Left cardiac atrium (tissue), 4 donors: ENCODE measurements at regions of chr3 and their contacts with region 1.

Region 1: GRCh38 chr3:52892625-52893311 is 4.6 kb downstream of the STIMATE start:
- DNase-seq: no peak
- ATAC-seq: no peak

Region 2: GRCh38 chr3:52845691-52846431 is 46.9 kb before region 1 on chr3:
- intact Hi-C with region 1: loop called in 1 of 2 experiments (anchors 5 kb)
- DNase-seq: no peak
- ATAC-seq: peak; percentile 5 to 16

Region 3: GRCh38 chr3:53023068-53023823 is 130.5 kb after region 1 on chr3:
- intact Hi-C with region 1: no loop called
- DNase-seq: no peak
- ATAC-seq: no peak